ENCODE measurements at regions of chr1 and their contacts with region 1.

Region 1: GRCh38 chr1:208238710-208239472 is 5.3 kb downstream of the PLXNA2 start:
- DNase-seq: no peak
- H3K4me3 ChIP-seq: no peak overlapping the region
- CTCF ChIP-seq: peak; percentile 74

Region 2: DNA sequence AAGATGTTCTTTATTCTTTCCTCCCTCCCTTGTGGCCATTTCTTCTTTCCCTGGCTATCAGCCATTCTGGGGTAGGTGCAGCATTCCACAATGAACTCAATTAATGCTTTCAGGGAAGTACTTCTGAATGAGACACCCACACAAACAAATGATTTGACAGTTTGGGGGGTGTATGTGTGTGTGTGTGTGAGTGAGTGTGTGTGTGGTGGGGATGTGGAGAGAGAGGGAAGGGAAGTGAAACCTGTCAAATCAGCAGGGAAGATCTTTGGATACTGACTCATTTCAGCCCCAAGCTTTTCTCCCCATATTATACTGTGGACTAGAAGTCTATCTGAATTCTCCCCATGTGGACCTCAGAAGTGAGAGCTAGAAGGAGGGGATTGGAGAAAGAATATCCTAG is 173.0 kb before region 1 on chr1:
- CTCF ChIA-PET with region 1: interaction called, 16 read pairs
- POLR2A ChIA-PET with region 1: no interaction called
- DNase-seq: no peak
- H3K4me3 ChIP-seq: no peak overlapping the region
- CTCF ChIP-seq: no peak

Region 3: GRCh38 chr1:208081972-208082371 is 156.9 kb before region 1 on chr1:
- CTCF ChIA-PET with region 1: interaction called, 40 read pairs
- POLR2A ChIA-PET with region 1: no interaction called
- DNase-seq: no peak
- H3K4me3 ChIP-seq: no peak overlapping the region
- CTCF ChIP-seq: peak; percentile 16

Region 4: GRCh38 chr1:208141610-208142192 is 97.2 kb before region 1 on chr1:
- CTCF ChIA-PET with region 1: interaction called, 16 read pairs
- POLR2A ChIA-PET with region 1: no interaction called
- DNase-seq: no peak
- H3K4me3 ChIP-seq: no peak overlapping the region
- CTCF ChIP-seq: no peak

Region 5: GRCh38 chr1:208159555-208160258 is 79.2 kb before region 1 on chr1:
- CTCF ChIA-PET with region 1: interaction called, 37 read pairs
- POLR2A ChIA-PET with region 1: no interaction called
- DNase-seq: peak; percentile 65
- H3K4me3 ChIP-seq: no peak overlapping the region
- CTCF ChIP-seq: no peak

Region 6: DNA sequence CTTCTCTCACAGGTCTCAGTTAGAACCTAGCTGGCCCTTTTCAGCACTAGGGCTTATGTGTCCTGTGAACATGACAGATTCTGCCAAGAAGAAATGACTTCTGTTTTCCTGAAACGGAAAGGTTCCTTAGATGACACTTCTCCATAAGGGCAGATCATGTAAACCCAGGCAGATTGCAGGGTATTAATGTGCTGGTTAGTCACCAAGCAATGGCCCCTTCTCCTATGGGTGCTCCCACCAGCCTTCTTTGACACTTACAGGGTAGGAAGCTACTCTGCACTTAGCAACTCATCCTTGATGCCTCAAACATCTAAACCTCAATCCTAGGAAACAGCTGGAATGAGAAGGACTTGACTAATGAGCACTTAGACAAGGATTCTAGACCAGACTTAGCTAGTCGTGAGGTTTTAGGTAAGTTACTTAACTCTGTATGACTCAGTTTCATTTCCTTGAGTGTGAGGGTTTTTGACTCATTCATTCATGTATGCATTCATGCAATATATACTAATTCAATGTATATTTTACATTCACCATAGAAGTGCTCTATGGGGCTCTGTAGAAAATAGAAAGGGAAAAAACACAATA is 79.4 kb after region 1 on chr1:
- CTCF ChIA-PET with region 1: no interaction called
- POLR2A ChIA-PET with region 1: no interaction called
- DNase-seq: no peak
- H3K4me3 ChIP-seq: no peak overlapping the region
- CTCF ChIP-seq: no peak